HCT116 (cell line): ENCODE measurements at regions of chr16 and their contacts with region 1.

Region 1: GRCh38 chr16:88737298-88738150 is 31.2 kb downstream of the CTU2 start:
- DNase-seq: peak; percentile 48
- ATAC-seq: peak; percentile 90
- H3K4me3 ChIP-seq: no peak overlapping the region
- H3K27ac ChIP-seq: peak overlapping the region; percentile 58; the same call in 1 of the 2 replicates
- H3K4me1 ChIP-seq: peaks cover 0 to 5% of the 10 kb centered on the region in 2 experiments; a peak in 1 of 4 replicates
- H3K27me3 ChIP-seq: no peaks in the 10 kb centered on the region
- CTCF ChIP-seq: peak; percentile 98 to 99 (median 99)
- POLR2A ChIP-seq: no peak
- RAD21 ChIP-seq: peak; percentile 79

Region 2: GRCh38 chr16:88770461-88771293 is 33.2 kb after region 1 on chr16:
- CTCF ChIA-PET with region 1: interaction called, 11 read pairs
- POLR2A ChIA-PET with region 1: no interaction called
- RAD21 ChIA-PET with region 1: interaction called in 1 of 2 experiments, 3 read pairs
- intact Hi-C with region 1: no loop called
- DNase-seq: peak; percentile 78
- ATAC-seq: peak; percentile 82
- H3K4me3 ChIP-seq: peak overlapping the region; percentile 34 to 37
- H3K27ac ChIP-seq: peak overlapping the region; percentile 92
- H3K4me1 ChIP-seq: peaks cover 63 to 99% of the 10 kb centered on the region in 2 experiments
- H3K27me3 ChIP-seq: no peaks in the 10 kb centered on the region
- CTCF ChIP-seq: no peak
- POLR2A ChIP-seq: no peak
- RAD21 ChIP-seq: no peak

Region 3: DNA sequence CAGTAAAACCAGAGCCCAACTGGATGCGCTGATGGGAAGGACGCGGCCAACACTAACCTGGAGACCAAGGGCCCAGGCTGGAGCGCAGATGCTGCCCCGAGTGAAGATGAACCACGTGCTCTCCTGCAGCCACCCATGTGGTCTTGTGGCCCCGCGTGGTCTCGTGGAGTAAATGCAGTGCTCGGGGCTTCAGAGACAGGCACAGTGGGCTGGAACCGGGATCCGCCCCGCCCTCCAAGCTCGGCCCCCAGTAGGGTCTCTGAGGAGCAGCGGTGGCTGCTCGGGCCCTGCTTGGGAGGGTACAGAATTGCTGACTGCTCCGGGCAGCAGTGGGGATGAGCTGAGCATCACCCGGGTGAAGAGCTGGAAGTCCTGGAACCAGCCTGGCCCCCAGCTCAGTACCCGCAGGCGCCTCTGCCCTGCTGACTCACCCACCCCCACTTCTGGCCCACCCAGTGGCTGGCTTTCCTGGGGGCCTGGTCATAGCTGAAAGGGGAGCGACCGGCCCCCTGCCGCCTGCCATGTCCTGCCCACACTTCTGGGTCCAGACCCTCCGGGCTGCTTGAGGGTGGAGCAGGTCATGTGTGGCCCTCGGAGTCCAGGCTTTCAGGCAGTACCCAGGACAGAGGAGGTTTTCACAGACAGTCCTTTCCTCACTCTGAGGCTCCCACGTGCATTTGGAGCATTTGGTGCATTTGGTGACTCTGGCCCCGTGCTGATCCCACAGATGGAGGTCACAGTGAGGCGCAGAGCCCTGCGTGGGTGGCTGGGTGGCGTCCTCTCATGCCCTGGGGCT is 54.4 kb after region 1 on chr16:
- CTCF ChIA-PET with region 1: interaction called, 59 read pairs
- POLR2A ChIA-PET with region 1: no interaction called
- RAD21 ChIA-PET with region 1: interaction called in 1 of 2 experiments, 3 read pairs
- intact Hi-C with region 1: no loop called
- DNase-seq: no peak
- ATAC-seq: no peak
- H3K4me3 ChIP-seq: no peak overlapping the region
- H3K27ac ChIP-seq: no peak overlapping the region; the same call in 1 of the 2 replicates
- H3K4me1 ChIP-seq: peaks cover 3 to 11% of the 10 kb centered on the region in 2 experiments; a peak in 2 of 4 replicates
- H3K27me3 ChIP-seq: no peaks in the 10 kb centered on the region
- CTCF ChIP-seq: no peak
- POLR2A ChIP-seq: no peak
- RAD21 ChIP-seq: no peak

Region 4: GRCh38 chr16:88811769-88812512 is 74.4 kb after region 1 on chr16 and contains the start of gene APRT:
- CTCF ChIA-PET with region 1: interaction called, 33 read pairs
- POLR2A ChIA-PET with region 1: interaction called, 3 read pairs
- RAD21 ChIA-PET with region 1: no interaction called
- intact Hi-C with region 1: no loop called
- DNase-seq: peak; percentile 91
- ATAC-seq: peak; percentile 64
- H3K4me3 ChIP-seq: peak within 1 kb of the TSS; percentile 72 to 75
- H3K27ac ChIP-seq: peak within 1 kb of the TSS; percentile 100
- H3K4me1 ChIP-seq: peaks cover 22 to 59% of the 10 kb centered on the region in 2 experiments
- H3K27me3 ChIP-seq: no peaks in the 10 kb centered on the region
- CTCF ChIP-seq: peak in 2 of 3 experiments; percentile 35; a peak in 4 of 6 replicates
- POLR2A ChIP-seq: peak; percentile 77
- RAD21 ChIP-seq: no peak
- total RNA-seq, gene APRT: 311 TPM

Region 5: GRCh38 chr16:89171463-89172170 is 434.1 kb after region 1 on chr16 and contains the start of gene CDH15:
- CTCF ChIA-PET with region 1: interaction called, 20 read pairs
- POLR2A ChIA-PET with region 1: no interaction called
- RAD21 ChIA-PET with region 1: no interaction called
- intact Hi-C with region 1: loop called (anchors 1 kb)
- DNase-seq: peak; percentile 98
- ATAC-seq: peak; percentile 90
- H3K4me3 ChIP-seq: peak within 1 kb of the TSS; percentile 38 to 54
- H3K27ac ChIP-seq: peak within 1 kb of the TSS; percentile 41; the same call in 1 of the 2 replicates
- H3K4me1 ChIP-seq: peaks cover 24 to 40% of the 10 kb centered on the region in 2 experiments
- H3K27me3 ChIP-seq: no peaks in the 10 kb centered on the region
- CTCF ChIP-seq: no peak
- POLR2A ChIP-seq: no peak
- RAD21 ChIP-seq: no peak
- total RNA-seq, gene CDH15: 3.8 TPM